Activated CD4-positive, alpha-beta memory T cell treated with anti-CD3 and anti-CD28 coated beads for 36 hours (primary cell): ENCODE measurements at regions of chr1 and their contacts with region 1.

Region 1: DNA sequence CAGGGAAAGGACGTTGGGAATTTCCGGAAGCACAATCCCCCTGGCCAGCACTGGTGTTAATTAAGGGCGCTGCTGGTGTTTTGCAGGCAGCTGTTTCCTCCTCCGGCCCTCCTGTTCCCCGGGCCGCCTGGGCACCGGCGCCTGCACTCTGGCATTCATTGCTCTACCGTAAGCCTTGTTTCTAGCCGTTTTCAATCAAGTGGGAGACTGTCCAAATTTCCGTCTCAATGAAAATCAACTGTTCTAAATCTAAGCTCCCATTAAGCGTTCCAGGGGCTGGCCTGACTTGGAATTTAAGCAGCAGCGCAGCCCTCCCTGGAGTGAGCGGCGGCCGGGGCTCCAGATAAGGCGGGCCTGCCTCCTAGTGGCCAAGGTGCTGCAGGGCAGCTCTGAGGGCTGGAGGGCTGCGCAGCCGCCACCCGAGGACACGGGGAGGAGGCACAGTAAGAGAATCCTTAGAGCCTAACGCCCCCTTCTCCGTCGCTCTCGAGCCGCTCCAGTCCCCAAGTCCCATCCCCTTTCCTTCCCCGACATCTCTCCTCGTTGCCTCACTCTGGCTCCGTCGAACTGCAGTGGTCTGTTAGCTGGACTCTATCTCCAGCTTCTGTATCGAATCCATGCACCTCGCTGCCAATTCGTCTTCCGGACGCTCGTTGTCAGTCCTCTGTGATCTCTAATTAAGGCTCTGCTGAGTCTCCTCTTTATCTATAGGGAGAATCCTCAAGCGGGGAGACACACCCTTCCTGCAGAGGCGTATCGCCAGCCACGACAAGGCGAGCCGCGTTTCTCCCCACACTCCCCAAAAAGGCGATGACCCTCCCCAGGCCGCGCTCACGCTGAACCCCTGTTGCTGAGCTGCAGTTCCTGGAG is 57.8 kb upstream of the LRRC8D start:
- DNase-seq: peak; percentile 91
- H3K4me3 Mint-ChIP-seq: peak overlapping the region; percentile 72
- H3K27ac Mint-ChIP-seq: peak overlapping the region; percentile 80
- H3K4me1 Mint-ChIP-seq: peaks cover 46% of the 10 kb centered on the region
- H3K27me3 Mint-ChIP-seq: no peaks in the 10 kb centered on the region

Region 2: DNA sequence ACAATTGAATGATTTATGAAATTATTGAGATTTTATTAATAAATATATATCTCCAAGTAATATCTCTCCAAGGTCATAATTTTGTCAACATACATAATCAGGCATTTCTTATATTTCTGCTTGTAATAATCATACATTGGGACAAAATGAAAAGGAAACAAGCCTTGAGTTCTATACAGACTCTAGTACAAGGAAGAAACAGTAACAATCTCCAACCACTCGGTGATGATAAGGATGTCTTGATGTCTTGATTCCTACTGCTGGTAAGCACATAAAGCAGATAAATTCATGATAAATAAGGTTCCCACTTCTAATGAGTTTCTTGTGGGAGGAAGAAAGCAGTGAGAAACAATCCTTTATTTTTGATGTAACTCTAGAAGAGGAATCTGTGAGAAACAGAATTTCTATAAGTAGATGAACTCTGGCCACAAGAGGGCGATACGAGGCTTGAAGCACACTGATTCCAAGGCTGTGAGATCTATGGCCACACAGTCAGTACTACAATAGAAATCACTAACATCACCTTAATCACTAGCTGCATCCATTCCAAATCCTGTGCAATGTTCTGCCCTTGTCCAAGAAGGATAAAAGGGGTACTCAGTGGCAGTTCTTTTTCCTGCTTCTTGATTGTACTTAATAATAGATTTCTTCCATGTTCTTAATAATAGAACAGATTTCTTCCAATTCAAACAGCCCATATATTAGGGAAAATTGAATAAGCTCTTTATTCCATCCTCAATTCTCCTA is 279.8 kb before region 1 on chr1:
- CTCF ChIA-PET with region 1: interaction called, 54 read pairs
- POLR2A ChIA-PET with region 1: no interaction called
- intact Hi-C with region 1: loop called (anchors 1 kb)
- DNase-seq: peak; percentile 85
- H3K4me3 Mint-ChIP-seq: no peak overlapping the region
- H3K27ac Mint-ChIP-seq: no peak overlapping the region
- H3K4me1 Mint-ChIP-seq: peaks cover 18% of the 10 kb centered on the region
- H3K27me3 Mint-ChIP-seq: no peaks in the 10 kb centered on the region

Region 3: DNA sequence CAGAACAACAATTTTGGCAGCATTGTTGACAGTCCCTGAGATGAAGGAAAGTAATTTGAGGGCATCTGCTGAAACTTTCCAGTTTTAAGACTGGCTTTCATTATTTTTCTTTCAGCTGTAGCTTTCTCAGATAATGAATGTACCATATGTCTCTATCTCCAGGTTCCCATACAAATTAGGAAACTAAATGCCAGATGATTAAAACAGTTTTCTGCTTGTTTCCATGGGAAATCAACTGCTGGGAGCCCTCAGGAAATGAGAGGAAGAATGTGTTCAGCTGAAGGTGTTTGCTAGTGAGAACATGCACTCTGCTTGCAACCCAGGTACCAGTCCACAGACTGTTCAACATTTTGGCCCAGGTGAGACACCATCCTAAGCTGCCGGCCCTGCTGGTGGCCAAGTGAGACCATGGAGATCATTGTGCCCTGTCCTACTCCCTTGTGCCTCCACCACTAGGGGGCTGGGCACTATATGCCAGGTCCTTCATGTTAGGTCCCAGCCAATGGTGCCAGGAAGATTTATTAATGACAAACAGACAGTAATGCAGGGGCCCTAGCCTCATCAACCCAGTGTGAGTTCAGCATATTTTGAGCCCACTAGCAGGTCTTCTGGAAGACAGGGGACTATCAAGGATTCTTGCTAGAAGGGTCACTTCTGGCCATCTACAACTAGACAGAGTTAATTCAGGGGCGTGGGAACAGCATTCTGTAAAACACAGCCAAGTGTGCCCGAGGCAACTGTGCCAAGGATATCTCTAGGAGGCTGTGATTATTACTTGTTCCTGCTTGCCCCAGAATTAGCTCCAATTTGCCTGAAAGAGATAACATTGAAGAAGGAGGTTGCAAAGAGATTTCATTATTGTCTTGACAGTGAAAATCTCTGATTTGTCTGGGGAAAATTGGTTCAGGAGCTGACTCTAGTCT is 147.1 kb before region 1 on chr1:
- CTCF ChIA-PET with region 1: interaction called, 25 read pairs
- POLR2A ChIA-PET with region 1: no interaction called
- intact Hi-C with region 1: no loop called
- DNase-seq: peak; percentile 33
- H3K4me3 Mint-ChIP-seq: no peak overlapping the region
- H3K27ac Mint-ChIP-seq: no peak overlapping the region
- H3K4me1 Mint-ChIP-seq: peaks cover 82% of the 10 kb centered on the region
- H3K27me3 Mint-ChIP-seq: no peaks in the 10 kb centered on the region

Region 4: GRCh38 chr1:89649783-89650182 is 113.2 kb before region 1 on chr1:
- CTCF ChIA-PET with region 1: interaction called, 21 read pairs
- POLR2A ChIA-PET with region 1: no interaction called
- intact Hi-C with region 1: no loop called
- DNase-seq: no peak
- H3K4me3 Mint-ChIP-seq: no peak overlapping the region
- H3K27ac Mint-ChIP-seq: peak overlapping the region; percentile 56
- H3K4me1 Mint-ChIP-seq: peaks cover 76% of the 10 kb centered on the region
- H3K27me3 Mint-ChIP-seq: no peaks in the 10 kb centered on the region

Region 5: GRCh38 chr1:89675677-89676076 is 87.3 kb before region 1 on chr1:
- CTCF ChIA-PET with region 1: interaction called, 23 read pairs
- POLR2A ChIA-PET with region 1: interaction called, 5 read pairs
- intact Hi-C with region 1: no loop called
- DNase-seq: no peak
- H3K4me3 Mint-ChIP-seq: no peak overlapping the region
- H3K27ac Mint-ChIP-seq: peak overlapping the region; percentile 83
- H3K4me1 Mint-ChIP-seq: peaks cover 86% of the 10 kb centered on the region
- H3K27me3 Mint-ChIP-seq: no peaks in the 10 kb centered on the region

Region 6: GRCh38 chr1:89719502-89720306 is 43.3 kb before region 1 on chr1:
- CTCF ChIA-PET with region 1: interaction called, 41 read pairs
- POLR2A ChIA-PET with region 1: interaction called, 21 read pairs
- intact Hi-C with region 1: loop called (anchors 1 kb)
- DNase-seq: no peak
- H3K4me3 Mint-ChIP-seq: no peak overlapping the region
- H3K27ac Mint-ChIP-seq: peak overlapping the region; percentile 97
- H3K4me1 Mint-ChIP-seq: peaks cover 92% of the 10 kb centered on the region
- H3K27me3 Mint-ChIP-seq: no peaks in the 10 kb centered on the region